ENCODE measurements at regions of chr3 and their contacts with region 1.

Region 1: DNA sequence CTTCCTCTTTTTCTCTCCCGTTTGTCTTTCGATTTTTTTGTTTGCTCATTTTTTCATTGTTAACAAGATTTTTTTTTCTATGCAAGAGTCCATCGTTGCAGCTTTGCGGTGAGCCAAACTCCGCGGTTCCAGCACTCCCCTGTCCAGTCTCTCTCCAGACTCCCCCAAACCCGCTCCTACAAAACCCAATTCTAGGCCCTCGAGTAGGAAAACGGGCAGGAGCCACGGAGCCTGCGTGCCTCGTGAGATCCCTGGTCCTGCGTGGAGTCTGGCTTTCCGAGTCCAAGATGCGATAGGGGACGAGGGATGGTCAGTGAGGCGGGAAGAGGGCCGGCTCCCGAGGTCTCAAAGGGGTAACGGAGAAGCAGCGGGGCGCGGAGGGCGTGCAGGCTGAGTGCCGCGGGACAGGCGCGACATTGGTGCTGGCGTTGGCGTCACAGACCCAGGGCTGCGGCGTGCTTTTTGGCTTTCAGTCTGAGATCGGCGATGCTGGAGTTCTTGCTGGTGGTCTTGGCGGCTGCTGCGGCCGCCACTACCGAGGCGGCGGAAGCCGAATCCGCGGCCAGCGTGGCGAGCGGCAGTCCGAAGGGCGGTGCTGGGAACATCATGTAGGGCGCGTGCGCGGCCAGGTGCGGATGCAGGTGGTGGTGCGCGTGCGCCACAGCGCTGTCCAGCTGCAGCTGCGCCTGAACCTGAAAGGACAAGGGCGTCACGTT is 8.5 kb downstream of the SHOX2 start:
- DNase-seq: peak; percentile 84
- ATAC-seq: peak; percentile 96
- H3K4me3 Mint-ChIP-seq: peak overlapping the region; percentile 85
- H3K27ac Mint-ChIP-seq: peak overlapping the region; percentile 38
- H3K4me1 Mint-ChIP-seq: peaks cover 21% of the 10 kb centered on the region
- H3K27me3 Mint-ChIP-seq: peaks cover 96% of the 10 kb centered on the region

Region 2: DNA sequence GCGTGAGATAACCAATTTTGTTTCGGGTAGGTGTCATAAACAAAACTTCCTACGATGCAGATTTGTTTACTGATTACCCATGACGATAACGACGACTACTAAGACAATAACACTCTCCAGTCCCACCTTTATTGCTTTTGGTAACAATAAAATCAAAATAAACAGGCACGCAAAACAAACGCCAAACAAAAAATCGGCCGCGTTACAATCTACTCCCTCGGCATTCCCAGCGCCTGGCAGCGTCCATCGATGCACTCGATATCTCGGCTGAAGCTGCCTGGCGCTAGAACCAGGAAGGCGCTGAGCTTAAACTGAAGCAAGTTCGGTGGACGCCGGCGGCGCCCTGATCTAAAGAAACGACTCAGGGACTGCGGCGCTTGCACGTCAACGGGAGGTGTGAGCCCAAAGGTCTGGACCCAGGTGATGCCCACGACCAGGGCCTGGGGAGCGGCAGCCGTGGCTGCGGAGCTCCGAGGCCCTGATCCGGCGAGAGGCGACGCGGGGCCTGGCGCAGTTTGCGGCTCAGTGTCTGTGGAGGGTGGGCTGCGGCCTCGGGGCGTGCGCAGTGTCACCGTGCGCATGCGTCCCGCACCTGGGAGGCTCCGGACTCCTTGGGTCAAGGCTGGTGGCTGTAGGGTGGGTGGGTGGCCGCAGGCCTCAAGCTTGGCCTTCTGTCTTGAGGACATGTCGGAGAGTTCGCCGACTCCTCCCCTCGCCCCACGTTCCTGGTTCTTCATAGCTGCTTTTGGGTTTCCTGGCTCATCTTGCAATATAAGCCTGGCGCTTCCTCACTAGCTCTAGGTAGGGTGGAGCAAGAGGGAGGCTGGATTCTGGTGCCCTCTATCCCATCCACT is 12.3 kb after region 1 on chr3 and contains the start of gene RSRC1:
- CTCF ChIA-PET with region 1: interaction called, 11 read pairs
- DNase-seq: peak; percentile 88
- ATAC-seq: peak; percentile 89
- H3K4me3 Mint-ChIP-seq: peak within 1 kb of the TSS; percentile 94
- H3K27ac Mint-ChIP-seq: peak within 1 kb of the TSS; percentile 87
- H3K4me1 Mint-ChIP-seq: peaks cover 49% of the 10 kb centered on the region
- H3K27me3 Mint-ChIP-seq: peaks cover 39% of the 10 kb centered on the region
- total RNA-seq, gene RSRC1: 45.1 to 45.4 TPM